Uterus (tissue), 4 donors: ENCODE measurements at regions of chr12 and their contacts with region 1.

Region 1: GRCh38 chr12:7995266-7995963 is 37.1 kb upstream of the FOXJ2 start:
- DNase-seq: peak; percentile 79 to 88
- H3K4me3 ChIP-seq: no peak overlapping the region
- H3K27ac ChIP-seq: peak overlapping the region; percentile 52 to 55
- H3K4me1 ChIP-seq: no peaks in the 10 kb centered on the region
- H3K27me3 ChIP-seq: no peaks in the 10 kb centered on the region
- CTCF ChIP-seq: peak; percentile 77 to 92 (median 80)
- POLR2A ChIP-seq: no peak

Region 2: DNA sequence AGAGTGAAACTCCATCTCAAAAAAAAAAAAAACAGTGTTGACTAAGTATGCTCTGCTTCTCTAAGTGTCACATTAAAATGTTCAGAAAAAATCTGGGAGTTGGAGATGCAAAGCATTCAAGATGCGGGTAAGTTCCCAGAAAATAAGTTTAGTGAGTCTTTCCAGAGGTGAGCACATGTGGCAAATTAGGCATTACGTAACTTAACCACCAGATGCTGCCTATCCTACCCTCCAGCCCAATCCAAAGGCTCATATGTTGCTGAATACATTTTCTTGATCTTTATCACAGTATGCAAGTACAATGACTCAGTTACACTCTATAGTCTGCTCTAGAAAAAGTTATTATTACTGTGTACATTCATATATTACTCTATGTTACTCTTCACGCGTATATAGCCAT is 126.3 kb before region 1 on chr12:
- intact Hi-C with region 1: loop called (anchors 10 kb)
- DNase-seq: no peak
- H3K4me3 ChIP-seq: no peak overlapping the region
- H3K27ac ChIP-seq: no peak overlapping the region
- H3K4me1 ChIP-seq: no peaks in the 10 kb centered on the region
- H3K27me3 ChIP-seq: peaks cover 0 to 4% of the 10 kb centered on the region in 2 donors
- CTCF ChIP-seq: no peak
- POLR2A ChIP-seq: no peak

Region 3: GRCh38 chr12:7915559-7916403 is 79.6 kb before region 1 on chr12:
- intact Hi-C with region 1: no loop called
- DNase-seq: no peak
- H3K4me3 ChIP-seq: no peak overlapping the region
- H3K27ac ChIP-seq: no peak overlapping the region
- H3K4me1 ChIP-seq: no peaks in the 10 kb centered on the region
- H3K27me3 ChIP-seq: no peaks in the 10 kb centered on the region
- CTCF ChIP-seq: no peak
- POLR2A ChIP-seq: no peak

Region 4: GRCh38 chr12:7933255-7933729 is 62.1 kb before region 1 on chr12:
- intact Hi-C with region 1: loop called (anchors 10 kb)
- DNase-seq: peak; percentile 64 to 82
- H3K4me3 ChIP-seq: peak overlapping the region in 1 of 2 donors; percentile 43
- H3K27ac ChIP-seq: peak overlapping the region; percentile 88 to 93
- H3K4me1 ChIP-seq: no peaks in the 10 kb centered on the region
- H3K27me3 ChIP-seq: no peaks in the 10 kb centered on the region
- CTCF ChIP-seq: peak; percentile 73 to 87 (median 82)
- POLR2A ChIP-seq: peak; percentile 47 to 53